ENCODE measurements at regions of chr1 and their contacts with region 1.

Region 1: GRCh38 chr1:192609110-192610079 is 26.6 kb upstream of the RGS13 start:
- DNase-seq: peak; percentile 26 to 88 (median 48)
- ATAC-seq: peak; percentile 99
- H3K4me3 ChIP-seq: no peak overlapping the region
- H3K4me3 Mint-ChIP-seq: peak overlapping the region; percentile 52
- H3K27ac ChIP-seq: no peak overlapping the region
- H3K27ac Mint-ChIP-seq: peak overlapping the region; percentile 67
- H3K4me1 ChIP-seq: peaks cover 11% of the 10 kb centered on the region
- H3K4me1 Mint-ChIP-seq: peaks cover 16% of the 10 kb centered on the region
- H3K27me3 ChIP-seq: no peaks in the 10 kb centered on the region
- H3K27me3 Mint-ChIP-seq: no peaks in the 10 kb centered on the region
- CTCF ChIP-seq: no peak

Region 2: GRCh38 chr1:192580351-192580962 is 28.9 kb before region 1 on chr1:
- CTCF ChIA-PET with region 1: no interaction called
- POLR2A ChIA-PET with region 1: no interaction called
- intact Hi-C with region 1: loop called (anchors 1 to 2 kb)
- DNase-seq: peak in 4 of 14 experiments; percentile 36 to 72 (median 60)
- ATAC-seq: peak; percentile 30
- H3K4me3 ChIP-seq: no peak overlapping the region
- H3K4me3 Mint-ChIP-seq: no peak overlapping the region
- H3K27ac ChIP-seq: no peak overlapping the region
- H3K27ac Mint-ChIP-seq: peak overlapping the region; percentile 48
- H3K4me1 ChIP-seq: peaks cover 4% of the 10 kb centered on the region
- H3K4me1 Mint-ChIP-seq: peaks cover 46% of the 10 kb centered on the region
- H3K27me3 ChIP-seq: no peaks in the 10 kb centered on the region
- H3K27me3 Mint-ChIP-seq: no peaks in the 10 kb centered on the region
- CTCF ChIP-seq: peak; percentile 65

Region 3: GRCh38 chr1:192793983-192794767 is 184.8 kb after region 1 on chr1:
- CTCF ChIA-PET with region 1: no interaction called
- POLR2A ChIA-PET with region 1: no interaction called
- intact Hi-C with region 1: loop called in 1 of 2 experiments (anchors 10 kb)
- DNase-seq: no peak
- ATAC-seq: no peak
- H3K4me3 ChIP-seq: no peak overlapping the region
- H3K4me3 Mint-ChIP-seq: no peak overlapping the region
- H3K27ac ChIP-seq: no peak overlapping the region
- H3K27ac Mint-ChIP-seq: no peak overlapping the region
- H3K4me1 ChIP-seq: no peaks in the 10 kb centered on the region
- H3K4me1 Mint-ChIP-seq: no peaks in the 10 kb centered on the region
- H3K27me3 ChIP-seq: peaks cover 0 to 5% of the 10 kb centered on the region in 2 experiments
- H3K27me3 Mint-ChIP-seq: peaks cover 10% of the 10 kb centered on the region
- CTCF ChIP-seq: no peak

Region 4: DNA sequence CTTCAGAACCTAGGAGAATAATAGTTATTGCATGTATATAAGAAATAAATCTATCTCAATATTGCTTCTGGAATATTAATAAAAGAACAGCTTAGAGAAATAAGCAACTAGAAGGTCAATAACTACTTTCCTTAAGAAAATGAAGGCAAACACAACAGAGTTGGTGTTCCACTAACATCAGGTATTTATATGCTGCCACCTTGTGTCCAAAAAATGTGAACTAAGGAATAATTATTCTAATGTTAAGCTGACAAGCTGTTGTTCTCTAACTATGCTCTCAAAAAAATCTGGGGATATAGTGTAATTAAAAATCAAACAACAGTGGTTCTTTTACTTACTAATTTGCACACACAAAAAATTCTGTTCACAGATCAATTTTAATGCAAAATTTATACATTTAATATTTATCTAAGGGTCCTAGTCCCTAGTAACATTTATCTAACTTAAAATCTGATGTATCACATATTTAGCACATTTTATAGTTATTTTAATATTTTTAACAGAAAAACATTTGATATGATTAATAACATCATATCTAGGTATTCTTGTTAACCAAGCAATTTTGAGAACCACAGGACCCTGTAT is 410.1 kb after region 1 on chr1:
- CTCF ChIA-PET with region 1: no interaction called
- POLR2A ChIA-PET with region 1: no interaction called
- intact Hi-C with region 1: loop called in 1 of 2 experiments (anchors 10 kb)
- DNase-seq: peak in 3 of 14 experiments; percentile 60 to 65 (median 63)
- ATAC-seq: no peak
- H3K4me3 ChIP-seq: no peak overlapping the region
- H3K4me3 Mint-ChIP-seq: no peak overlapping the region
- H3K27ac ChIP-seq: no peak overlapping the region
- H3K27ac Mint-ChIP-seq: no peak overlapping the region
- H3K4me1 ChIP-seq: no peaks in the 10 kb centered on the region
- H3K4me1 Mint-ChIP-seq: no peaks in the 10 kb centered on the region
- H3K27me3 ChIP-seq: no peaks in the 10 kb centered on the region
- H3K27me3 Mint-ChIP-seq: no peaks in the 10 kb centered on the region
- CTCF ChIP-seq: peak; percentile 68

Measured in CD4-positive, alpha-beta T cell (primary cell).